ENCODE measurements at regions of chr17 and their contacts with region 1.

Region 1: GRCh38 chr17:81651692-81652091 is 4.7 kb downstream of the PDE6G start:
- DNase-seq: no peak
- H3K4me3 ChIP-seq: no peak overlapping the region
- H3K27ac ChIP-seq: no peak overlapping the region
- H3K4me1 ChIP-seq: peaks cover 0 to 24% (median 8%) of the 10 kb centered on the region in 4 experiments; a peak in 6 of 7 replicates
- H3K27me3 ChIP-seq: peaks cover 2 to 15% (median 9%) of the 10 kb centered on the region in 4 experiments; a peak in 5 of 7 replicates
- CTCF ChIP-seq: no peak
- EP300 ChIP-seq: no peak
- POLR2A ChIP-seq: no peak
- RAD21 ChIP-seq: no peak

Region 2: DNA sequence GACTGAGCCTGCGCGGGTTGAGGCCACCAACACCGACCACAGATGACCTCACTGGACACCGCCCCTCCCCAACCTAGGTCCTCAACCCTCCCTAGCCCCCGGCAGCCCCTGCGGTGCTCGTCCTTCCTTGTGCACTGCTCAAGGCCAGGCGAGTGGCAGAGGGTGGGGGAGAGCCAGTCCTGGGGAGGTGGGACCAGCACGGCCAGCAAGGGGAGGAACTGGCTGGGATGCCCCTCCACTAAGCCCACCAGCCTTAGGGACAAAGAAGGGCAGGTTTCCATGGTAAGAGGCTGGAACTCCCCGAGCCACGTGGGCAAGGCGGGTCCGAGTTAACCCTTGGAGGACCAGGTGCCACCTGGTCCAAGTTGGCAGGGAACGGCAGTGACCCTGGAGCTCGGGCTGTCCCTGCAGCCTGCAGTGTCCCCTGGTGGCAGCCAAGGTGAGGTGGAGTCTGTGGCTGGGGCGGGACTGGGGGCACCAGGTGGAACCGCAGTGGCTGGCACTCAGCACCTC is 114.3 kb before region 1 on chr17:
- CTCF ChIA-PET with region 1: no interaction called
- POLR2A ChIA-PET with region 1: no interaction called
- DNase-seq: peak in 1 of 2 experiments; percentile 86
- H3K4me3 ChIP-seq: peak overlapping the region in 1 of 4 experiments; percentile 51; a peak in 4 of 8 replicates
- H3K27ac ChIP-seq: no peak overlapping the region
- H3K4me1 ChIP-seq: peaks cover 0 to 11% (median 5%) of the 10 kb centered on the region in 4 experiments; a peak in 5 of 7 replicates
- H3K27me3 ChIP-seq: peaks cover 8 to 28% (median 24%) of the 10 kb centered on the region in 4 experiments; a peak in 6 of 7 replicates
- CTCF ChIP-seq: peak; percentile 91 to 97 (median 94)
- EP300 ChIP-seq: no peak
- POLR2A ChIP-seq: no peak; a peak in 1 of 3 replicates
- RAD21 ChIP-seq: peak; percentile 86 to 91

Region 3: DNA sequence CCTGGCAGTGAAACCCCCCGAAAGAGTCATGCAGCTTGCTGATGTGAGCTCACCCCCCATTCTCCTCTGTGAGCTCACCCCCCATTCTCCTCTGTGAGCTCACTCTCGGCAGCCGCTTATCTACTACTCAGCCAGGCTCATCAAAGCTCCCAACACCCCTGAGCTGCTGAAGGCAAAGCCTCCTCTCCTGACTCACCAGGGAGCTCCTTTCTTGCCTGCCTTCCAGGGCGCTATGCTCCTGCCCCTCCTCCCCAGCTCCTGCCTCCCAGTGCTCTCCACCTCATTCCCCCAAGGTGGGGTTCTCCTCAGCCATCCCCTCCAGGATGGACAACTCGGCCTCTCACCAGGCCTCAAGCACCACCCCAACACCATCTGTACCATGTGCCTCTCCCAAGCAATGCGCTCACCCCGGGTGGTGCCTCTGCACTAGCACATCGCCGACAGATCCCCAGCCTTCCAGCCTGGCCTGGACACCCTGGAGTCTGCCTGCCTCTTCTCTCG is 71.8 kb before region 1 on chr17:
- CTCF ChIA-PET with region 1: no interaction called
- POLR2A ChIA-PET with region 1: no interaction called
- DNase-seq: no peak
- H3K4me3 ChIP-seq: no peak overlapping the region
- H3K27ac ChIP-seq: no peak overlapping the region
- H3K4me1 ChIP-seq: no peaks in the 10 kb centered on the region
- H3K27me3 ChIP-seq: no peaks in the 10 kb centered on the region
- CTCF ChIP-seq: no peak
- EP300 ChIP-seq: no peak
- POLR2A ChIP-seq: no peak
- RAD21 ChIP-seq: no peak

Region 4: DNA sequence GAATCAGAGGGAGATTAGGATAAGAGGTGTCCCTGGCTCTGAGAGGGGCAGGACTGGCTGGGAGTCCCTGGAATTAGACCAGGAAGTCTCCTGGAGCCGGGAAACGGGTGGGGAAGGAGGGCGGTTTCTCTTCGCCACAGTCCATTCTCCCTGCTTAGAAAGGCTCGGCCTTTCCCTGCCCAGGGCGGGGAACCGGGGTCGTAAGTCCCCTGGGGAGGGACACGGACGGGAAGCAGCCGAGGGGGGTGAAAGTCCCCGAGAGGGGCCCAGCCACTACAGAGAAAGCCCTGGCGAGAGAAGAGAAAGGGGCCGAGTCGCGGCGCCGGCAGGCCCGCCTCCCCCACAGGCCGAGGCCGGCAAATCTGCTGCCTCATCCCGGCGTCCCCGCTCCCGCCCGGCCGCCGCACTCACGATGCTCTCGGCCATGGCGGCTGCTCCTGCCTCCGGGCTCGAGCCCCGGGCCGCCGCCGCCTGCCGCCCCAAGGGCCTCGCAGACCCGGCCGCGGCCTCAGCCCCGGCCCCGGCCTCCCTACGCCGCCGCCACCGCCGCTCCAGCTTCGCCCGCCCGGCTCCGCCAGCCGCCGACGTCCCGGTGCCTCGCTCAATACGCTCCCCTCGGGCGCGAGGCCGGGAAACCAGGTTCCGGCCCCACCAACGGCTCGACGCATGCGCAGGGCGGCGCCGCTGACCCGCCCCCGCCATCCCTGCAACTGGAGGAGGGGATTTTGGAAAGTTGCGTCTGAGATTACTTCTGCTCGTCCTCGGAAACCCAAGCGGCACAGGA is 15.0 kb before region 1 on chr17 and contains the starts of genes NPLOC4 and TSPAN10:
- CTCF ChIA-PET with region 1: interaction called, 3 read pairs
- POLR2A ChIA-PET with region 1: interaction called, 14 read pairs
- DNase-seq: peak; percentile 58 to 94
- H3K4me3 ChIP-seq: peak within 1 kb of the TSS; percentile 78 to 96 (median 87)
- H3K27ac ChIP-seq: peak within 1 kb of the TSS; percentile 83
- H3K4me1 ChIP-seq: no peaks in the 10 kb centered on the region
- H3K27me3 ChIP-seq: no peaks in the 10 kb centered on the region
- CTCF ChIP-seq: no peak
- EP300 ChIP-seq: peak in 1 of 2 experiments; percentile 71; a peak in 1 of 3 replicates
- POLR2A ChIP-seq: peak in 1 of 2 experiments; percentile 92; a peak in 2 of 3 replicates
- RAD21 ChIP-seq: no peak; a peak in 1 of 4 replicates
- total RNA-seq, gene NPLOC4: 79.8 and 92.7 TPM in 2 replicates
- total RNA-seq, gene TSPAN10: 0.96 and 0.99 TPM in 2 replicates

Region 5: DNA sequence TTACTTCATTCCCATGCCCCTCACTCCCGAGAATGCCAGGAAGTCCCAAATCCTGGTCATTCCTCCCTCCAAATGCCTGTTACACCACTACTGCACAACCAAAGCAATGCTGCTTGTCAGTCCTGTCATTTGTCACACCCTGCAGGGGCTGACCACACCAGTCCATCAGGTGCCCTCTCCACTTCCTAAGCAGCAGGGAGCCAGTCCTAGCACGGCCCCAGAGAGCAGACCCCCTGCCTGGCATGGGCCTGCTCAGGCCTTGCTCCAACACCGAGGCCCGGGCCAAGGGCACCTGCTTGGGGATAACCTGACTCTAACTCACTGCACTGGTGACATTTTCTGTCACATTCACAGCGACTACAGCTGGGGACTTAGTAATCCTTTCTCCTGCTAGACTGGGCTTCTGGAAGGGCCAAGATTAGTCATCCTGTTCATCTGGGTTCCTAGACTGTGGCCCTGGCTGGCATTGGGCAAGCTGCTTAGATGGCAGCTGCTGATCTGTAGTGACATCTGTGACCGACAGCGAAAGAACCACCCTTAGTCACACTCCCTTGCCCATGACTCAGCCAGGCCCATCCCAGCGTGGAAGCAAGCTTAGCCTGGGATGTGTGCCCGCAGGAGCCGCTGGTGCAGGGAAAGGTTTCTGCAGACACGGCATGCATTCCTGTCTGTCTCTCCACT is 234.3 kb after region 1 on chr17:
- CTCF ChIA-PET with region 1: no interaction called
- POLR2A ChIA-PET with region 1: no interaction called
- DNase-seq: no peak
- H3K4me3 ChIP-seq: no peak overlapping the region
- H3K27ac ChIP-seq: no peak overlapping the region
- H3K4me1 ChIP-seq: peaks cover 0 to 3% (median 2%) of the 10 kb centered on the region in 4 experiments; a peak in 5 of 7 replicates
- H3K27me3 ChIP-seq: no peaks in the 10 kb centered on the region
- CTCF ChIP-seq: no peak
- EP300 ChIP-seq: no peak
- POLR2A ChIP-seq: peak; percentile 48 to 64
- RAD21 ChIP-seq: no peak